ENCODE measurements at regions of chr3 and their contacts with region 1.

Region 1: GRCh38 chr3:48548729-48549705 is 7.6 kb downstream of the PFKFB4 start:
- DNase-seq: peak; percentile 85
- H3K4me3 ChIP-seq: no peak overlapping the region
- H3K27ac ChIP-seq: no peak overlapping the region
- H3K4me1 ChIP-seq: peaks cover 4% of the 10 kb centered on the region
- H3K27me3 ChIP-seq: no peaks in the 10 kb centered on the region
- CTCF ChIP-seq: peak; percentile 87 to 91 (median 90)
- POLR2A ChIP-seq: no peak

Region 2: GRCh38 chr3:48459773-48460516 is 89.1 kb before region 1 on chr3:
- intact Hi-C with region 1: loop called (anchors 5 kb)
- DNase-seq: no peak
- H3K4me3 ChIP-seq: no peak overlapping the region
- H3K27ac ChIP-seq: no peak overlapping the region
- H3K4me1 ChIP-seq: peaks cover 2% of the 10 kb centered on the region
- H3K27me3 ChIP-seq: no peaks in the 10 kb centered on the region
- CTCF ChIP-seq: no peak
- POLR2A ChIP-seq: no peak